ENCODE measurements at regions of chr12 and their contacts with region 1.

Region 1: GRCh38 chr12:69070319-69071090 is 137.5 kb upstream of the CPM start:
- DNase-seq: peak; percentile 20
- ATAC-seq: peak; percentile 79
- H3K4me3 Mint-ChIP-seq: no peak overlapping the region
- H3K27ac Mint-ChIP-seq: no peak overlapping the region
- H3K4me1 Mint-ChIP-seq: no peaks in the 10 kb centered on the region
- H3K27me3 Mint-ChIP-seq: peaks cover 7% of the 10 kb centered on the region
- CTCF ChIP-seq: no peak

Region 2: GRCh38 chr12:68831272-68831671 is 239.2 kb before region 1 on chr12:
- CTCF ChIA-PET with region 1: interaction called, 13 read pairs
- POLR2A ChIA-PET with region 1: no interaction called
- intact Hi-C with region 1: loop called (anchors 1 kb)
- DNase-seq: no peak
- ATAC-seq: no peak
- H3K4me3 Mint-ChIP-seq: no peak overlapping the region
- H3K27ac Mint-ChIP-seq: no peak overlapping the region
- H3K4me1 Mint-ChIP-seq: peaks cover 5% of the 10 kb centered on the region
- H3K27me3 Mint-ChIP-seq: no peaks in the 10 kb centered on the region
- CTCF ChIP-seq: no peak

Region 3: DNA sequence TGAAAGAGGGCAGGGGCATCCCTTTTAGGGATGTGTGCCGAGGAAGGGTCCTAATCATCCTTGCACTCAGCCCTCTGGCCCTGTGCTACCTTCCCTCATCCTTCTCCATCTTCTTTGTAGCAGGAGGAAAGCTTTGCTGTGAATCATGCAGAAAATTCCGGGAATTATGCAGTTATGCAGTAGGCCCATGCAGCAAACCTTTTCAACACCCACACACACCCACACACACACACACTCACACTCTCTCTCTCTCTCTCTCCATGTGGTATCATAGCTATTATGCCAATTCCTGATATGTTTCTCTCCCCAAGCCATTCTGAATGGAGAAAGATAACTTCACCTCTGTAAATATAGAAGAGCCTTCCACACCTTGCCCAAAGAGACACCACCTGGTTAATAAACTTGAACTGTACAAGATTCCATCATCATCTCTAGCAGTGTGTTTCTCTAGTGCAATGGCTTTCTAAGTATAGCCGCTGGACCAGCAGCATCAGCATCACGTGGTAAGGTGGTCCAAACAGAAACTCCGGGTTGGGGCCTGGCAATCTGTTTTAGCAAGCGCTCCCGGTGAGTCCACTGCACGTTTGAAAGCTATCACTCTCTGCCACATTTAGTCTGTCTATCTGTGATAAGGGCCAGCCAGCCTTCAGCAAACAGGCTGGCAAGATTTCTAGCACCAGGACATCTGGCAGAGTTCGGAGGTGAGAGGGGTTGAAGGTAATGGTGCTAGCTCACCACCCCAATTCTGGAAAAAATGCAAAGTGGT is 204.9 kb before region 1 on chr12:
- CTCF ChIA-PET with region 1: interaction called, 10 read pairs
- POLR2A ChIA-PET with region 1: no interaction called
- intact Hi-C with region 1: loop called (anchors 1 kb)
- DNase-seq: no peak
- ATAC-seq: no peak
- H3K4me3 Mint-ChIP-seq: no peak overlapping the region
- H3K27ac Mint-ChIP-seq: no peak overlapping the region
- H3K4me1 Mint-ChIP-seq: peaks cover 18% of the 10 kb centered on the region
- H3K27me3 Mint-ChIP-seq: no peaks in the 10 kb centered on the region
- CTCF ChIP-seq: no peak

Region 4: DNA sequence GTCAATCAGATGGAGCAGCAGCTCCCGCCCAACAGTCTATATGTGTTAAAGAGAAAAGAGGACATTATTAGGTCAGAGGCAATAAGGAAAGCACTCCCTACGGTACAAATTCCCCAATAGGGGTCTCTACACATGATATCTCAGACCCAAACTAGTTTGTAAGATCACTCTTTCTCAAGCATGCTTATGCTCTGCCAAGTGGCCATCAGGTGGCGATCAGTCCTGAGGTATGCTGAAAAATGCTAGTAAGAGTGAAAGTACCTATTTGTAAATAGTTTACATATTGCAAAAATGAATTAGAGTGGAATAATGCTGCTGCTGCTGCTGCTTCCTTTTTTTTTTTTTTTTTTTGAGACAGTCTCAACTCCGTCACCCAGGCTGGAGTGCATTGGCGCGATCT is 198.6 kb before region 1 on chr12:
- CTCF ChIA-PET with region 1: interaction called, 9 read pairs
- POLR2A ChIA-PET with region 1: no interaction called
- intact Hi-C with region 1: loop called (anchors 1 kb)
- DNase-seq: no peak
- ATAC-seq: peak; percentile 54
- H3K4me3 Mint-ChIP-seq: no peak overlapping the region
- H3K27ac Mint-ChIP-seq: no peak overlapping the region
- H3K4me1 Mint-ChIP-seq: peaks cover 7% of the 10 kb centered on the region
- H3K27me3 Mint-ChIP-seq: no peaks in the 10 kb centered on the region
- CTCF ChIP-seq: no peak

Region 5: DNA sequence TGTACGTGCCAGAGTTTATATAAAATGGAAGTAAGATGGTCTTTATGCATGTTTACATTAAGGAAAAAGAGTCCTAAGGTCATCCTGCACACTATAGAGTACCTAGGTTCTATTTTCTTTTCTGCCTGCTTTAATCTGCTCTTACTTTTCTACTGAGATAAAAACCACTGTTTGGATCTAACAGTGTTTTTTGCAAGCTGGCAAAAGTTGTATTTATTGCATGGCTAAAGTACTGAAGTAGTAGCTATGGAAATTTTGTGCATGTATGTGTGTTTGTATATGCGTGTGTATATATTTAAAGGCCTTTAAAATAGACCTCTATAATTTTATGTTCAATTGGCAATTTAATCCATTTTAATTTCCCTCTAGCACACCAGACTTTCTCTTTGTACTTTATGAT is 70.6 kb after region 1 on chr12:
- CTCF ChIA-PET with region 1: no interaction called
- POLR2A ChIA-PET with region 1: interaction called, 10 read pairs
- intact Hi-C with region 1: no loop called
- DNase-seq: no peak
- ATAC-seq: no peak
- H3K4me3 Mint-ChIP-seq: no peak overlapping the region
- H3K27ac Mint-ChIP-seq: no peak overlapping the region
- H3K4me1 Mint-ChIP-seq: no peaks in the 10 kb centered on the region
- H3K27me3 Mint-ChIP-seq: peaks cover 6% of the 10 kb centered on the region
- CTCF ChIP-seq: no peak